Adrenal gland (tissue), 19 donors: ENCODE measurements at regions of chr18 and their contacts with region 1.

Region 1: DNA sequence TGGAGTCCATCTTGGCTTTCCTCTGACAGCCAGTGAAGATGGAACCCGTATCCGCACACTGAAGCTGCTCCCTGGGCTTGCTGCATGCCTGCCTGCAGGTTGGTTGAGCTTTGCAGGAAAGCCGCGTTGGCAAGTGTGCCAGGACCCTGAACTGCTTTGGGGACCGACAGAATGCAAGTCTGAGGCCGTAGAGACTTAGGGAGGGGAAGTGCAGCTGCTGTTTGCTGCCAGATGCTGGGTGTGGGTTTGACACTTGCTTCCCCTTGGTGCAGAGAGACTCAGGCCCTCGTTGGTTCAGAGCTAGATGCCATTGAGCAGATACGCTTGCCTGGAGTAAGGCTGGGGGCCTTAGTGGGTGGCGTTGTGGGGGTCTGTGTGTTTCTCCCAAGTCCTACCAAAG is 13.1 kb upstream of the PHLPP1 start:
- DNase-seq: no peak
- H3K4me3 ChIP-seq: no peak overlapping the region
- H3K27ac ChIP-seq: no peak overlapping the region
- H3K4me1 ChIP-seq: no peaks in the 10 kb centered on the region
- H3K27me3 ChIP-seq: no peaks in the 10 kb centered on the region
- CTCF ChIP-seq: no peak
- POLR2A ChIP-seq: no peak

Region 2: DNA sequence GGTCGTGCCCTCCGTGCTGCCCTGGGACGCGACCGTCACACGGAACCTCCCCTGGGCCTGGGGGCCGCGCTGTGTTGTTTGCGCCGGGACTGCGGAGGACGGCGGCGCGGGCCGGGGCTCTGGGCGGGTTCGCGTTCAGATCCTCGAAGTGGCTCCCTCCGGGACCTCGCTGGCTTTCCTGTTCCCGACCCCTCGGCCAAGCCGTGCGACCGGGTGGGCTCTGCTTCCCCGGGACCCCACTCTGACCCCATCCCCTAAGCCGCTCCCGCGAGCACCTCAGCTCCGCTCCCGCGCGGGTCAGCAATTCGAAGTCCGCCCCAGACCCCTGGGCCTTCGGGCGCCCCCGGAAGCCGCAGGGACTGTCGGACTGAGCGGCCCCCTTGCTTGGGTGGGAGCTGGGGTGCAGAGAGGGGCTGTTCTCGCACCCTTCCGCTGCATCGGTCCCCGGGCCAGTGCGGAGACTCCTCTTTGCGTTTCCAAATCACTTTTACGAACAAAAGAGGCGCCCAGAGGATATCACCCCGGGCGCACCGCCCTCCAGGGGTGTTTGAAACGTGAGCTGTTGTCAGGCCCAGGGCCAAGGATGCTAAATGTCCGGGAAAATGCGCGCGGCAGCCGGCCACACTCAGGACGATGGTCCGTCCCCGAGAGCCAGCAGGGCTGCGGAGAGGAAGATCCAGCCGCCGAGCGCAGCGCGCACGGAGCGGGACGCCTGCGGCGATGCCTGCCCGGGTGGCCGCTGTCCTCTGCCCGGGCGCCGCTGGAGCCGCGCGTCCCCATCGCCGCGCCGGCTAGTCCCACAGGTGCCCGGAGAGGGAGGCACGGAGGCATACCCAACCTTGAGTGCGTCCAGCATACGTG is 105.9 kb before region 1 on chr18:
- intact Hi-C with region 1: loop called in 1 of 2 experiments (anchors 10 kb)
- DNase-seq: peak in 1 of 7 donors; percentile 27
- H3K4me3 ChIP-seq: peak overlapping the region in 2 of 4 donors; percentile 16 to 40
- H3K27ac ChIP-seq: no peak overlapping the region
- H3K4me1 ChIP-seq: peaks cover 4 to 9% of the 10 kb centered on the region in 2 donors
- H3K27me3 ChIP-seq: peaks cover 32% of the 10 kb centered on the region
- CTCF ChIP-seq: no peak
- POLR2A ChIP-seq: no peak

Region 3: DNA sequence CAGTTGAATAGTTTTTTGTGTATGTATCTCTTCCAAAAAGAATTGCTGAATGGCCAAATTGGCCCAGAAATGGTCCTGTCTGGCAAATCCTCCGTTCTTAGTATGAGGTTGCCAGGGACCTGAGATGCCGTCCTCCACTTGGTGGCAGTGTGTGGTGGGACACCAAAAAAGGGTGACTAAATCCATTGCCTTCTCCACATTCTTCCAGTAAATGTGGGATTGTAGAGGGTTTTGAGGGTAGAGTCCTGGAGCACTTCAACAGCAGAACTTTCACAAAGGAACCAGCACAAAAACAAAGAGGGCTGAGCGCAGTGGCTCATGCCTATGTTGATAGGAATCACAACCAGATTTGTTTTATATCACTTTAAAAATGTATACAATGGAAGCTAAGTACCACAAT is 417.4 kb after region 1 on chr18:
- intact Hi-C with region 1: no loop called
- DNase-seq: peak in 3 of 7 donors; percentile 21 to 40 (median 32)
- H3K4me3 ChIP-seq: no peak overlapping the region
- H3K27ac ChIP-seq: no peak overlapping the region
- H3K4me1 ChIP-seq: no peaks in the 10 kb centered on the region
- H3K27me3 ChIP-seq: no peaks in the 10 kb centered on the region
- CTCF ChIP-seq: peak in 5 of 6 experiments; percentile 14 to 44 (median 27)
- POLR2A ChIP-seq: no peak